Head of caudate nucleus (tissue), 42 donors: ENCODE measurements at regions of chr15 and their contacts with region 1.

Region 1: DNA sequence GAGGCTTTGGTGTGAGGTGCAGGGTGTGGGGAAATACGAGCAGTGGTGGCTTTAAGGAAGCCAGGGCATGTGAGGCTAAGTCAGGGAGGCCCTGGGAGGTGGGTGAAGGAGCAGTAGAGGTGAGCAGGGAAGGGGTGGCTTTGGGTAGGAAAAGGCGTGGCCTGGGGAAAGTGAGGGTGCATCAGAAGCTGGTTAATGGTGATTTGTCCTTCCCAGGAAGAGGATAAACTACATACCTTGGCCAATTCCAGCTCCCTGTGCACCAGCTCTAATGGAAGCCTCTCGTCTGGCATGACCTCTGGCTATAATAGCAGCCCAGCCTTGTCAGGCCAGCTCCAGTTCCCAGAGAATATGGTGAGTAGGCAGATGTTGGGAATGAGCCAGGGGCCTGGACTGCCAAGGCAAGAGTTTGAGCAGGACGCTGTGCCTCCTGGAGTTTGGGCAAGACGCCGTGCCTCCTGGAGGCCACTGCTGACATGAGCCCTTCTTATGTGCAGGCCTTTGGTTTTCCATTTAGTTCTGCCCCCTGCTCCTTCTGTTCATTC is 41.3 kb downstream of the CDAN1 start:
- DNase-seq: peak in 1 of 42 donors; percentile 30

Region 2: DNA sequence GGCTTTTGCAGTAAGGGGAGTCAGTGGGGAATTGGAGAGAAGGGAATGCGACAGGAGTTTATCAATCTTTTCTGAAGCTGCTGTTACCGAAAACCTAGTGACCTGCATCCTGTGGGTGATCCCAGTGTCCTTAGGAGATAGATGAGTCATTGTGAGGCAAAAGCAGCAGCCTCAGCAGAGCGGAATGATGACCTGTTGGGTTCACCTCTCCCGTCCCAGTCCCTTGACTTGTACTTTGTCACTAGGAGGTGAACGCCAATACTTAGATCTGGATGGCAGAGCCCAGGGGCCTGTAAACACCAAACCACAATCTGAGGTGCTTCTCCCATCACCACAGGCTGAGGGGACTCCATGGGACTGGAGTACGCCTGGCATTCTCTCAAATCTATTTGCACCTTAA is 23.5 kb after region 1 on chr15:
- intact Hi-C with region 1: loop called (anchors 2 kb)
- DNase-seq: no peak